ENCODE measurements at regions of chr17 and their contacts with region 1.

Region 1: DNA sequence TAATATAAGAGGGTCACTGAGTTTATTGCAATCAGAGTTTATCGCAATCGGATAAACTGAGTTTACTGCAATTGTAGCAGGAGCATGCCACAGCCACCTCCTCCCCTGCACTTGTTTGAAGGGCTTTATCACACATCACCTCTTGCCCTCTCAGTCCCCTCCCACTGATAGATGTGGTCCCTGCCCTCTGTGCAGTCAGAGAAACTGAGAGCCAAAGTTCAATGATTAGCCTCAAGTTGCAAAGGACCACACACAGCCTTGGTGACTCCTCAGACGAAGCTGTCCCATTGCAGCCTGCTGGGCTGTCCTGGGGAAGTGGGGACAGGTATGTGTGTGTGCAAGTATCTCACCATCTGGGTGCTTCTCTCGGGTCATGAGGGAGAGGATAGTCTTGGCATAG is 13.6 kb downstream of the ACLY start:
- DNase-seq: no peak
- ATAC-seq: no peak

Region 2: DNA sequence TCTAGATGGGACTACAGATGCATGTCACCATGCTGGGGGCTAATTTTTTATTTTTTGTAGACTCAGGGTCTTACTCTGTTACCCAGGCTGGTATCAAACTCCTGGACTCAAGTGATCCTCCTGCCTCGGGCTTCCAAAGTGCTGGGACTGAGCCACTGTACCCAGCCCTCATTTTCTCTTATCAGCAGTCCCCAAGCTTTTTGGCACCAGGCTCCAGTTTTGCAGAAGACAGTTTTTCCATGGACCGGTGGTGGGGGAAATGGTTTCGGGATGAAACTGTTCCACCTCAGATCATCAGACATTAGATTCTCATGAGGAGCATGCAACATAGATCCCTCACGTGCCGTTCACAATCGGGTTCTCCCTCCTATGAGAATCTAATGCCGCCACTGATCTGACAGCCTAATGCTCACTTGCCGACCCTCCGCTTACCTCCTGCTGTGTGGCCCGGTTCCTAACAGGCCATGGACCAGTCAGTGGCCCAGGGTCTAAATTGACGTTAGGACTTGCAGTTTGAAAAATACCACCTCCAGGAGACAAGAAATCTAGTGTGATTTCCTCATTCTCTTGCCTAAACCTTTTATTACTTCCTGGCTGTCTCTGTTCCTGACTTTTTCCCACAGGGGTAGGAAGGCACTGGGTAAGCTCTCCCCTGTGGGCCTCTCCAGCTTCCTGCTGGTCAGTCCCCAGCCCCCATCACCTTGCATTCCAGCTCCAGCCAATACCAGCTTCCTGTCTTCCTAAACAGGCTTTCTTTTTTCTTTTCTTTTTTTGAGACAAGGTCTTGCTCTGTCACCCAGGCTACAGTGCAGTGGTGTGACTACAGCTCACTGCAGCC is 52.1 kb after region 1 on chr17:
- intact Hi-C with region 1: loop called (anchors 1 kb)
- DNase-seq: no peak
- ATAC-seq: no peak

Region 3: GRCh38 chr17:42193969-42194899 is 289.1 kb after region 1 on chr17 and contains the start of gene GHDC:
- intact Hi-C with region 1: no loop called
- DNase-seq: peak; percentile 89
- ATAC-seq: peak; percentile 96
- total RNA-seq, gene GHDC: 22.7 TPM